K562 (cell line): ENCODE measurements at regions of chr3 and their contacts with region 1.

Region 1: DNA sequence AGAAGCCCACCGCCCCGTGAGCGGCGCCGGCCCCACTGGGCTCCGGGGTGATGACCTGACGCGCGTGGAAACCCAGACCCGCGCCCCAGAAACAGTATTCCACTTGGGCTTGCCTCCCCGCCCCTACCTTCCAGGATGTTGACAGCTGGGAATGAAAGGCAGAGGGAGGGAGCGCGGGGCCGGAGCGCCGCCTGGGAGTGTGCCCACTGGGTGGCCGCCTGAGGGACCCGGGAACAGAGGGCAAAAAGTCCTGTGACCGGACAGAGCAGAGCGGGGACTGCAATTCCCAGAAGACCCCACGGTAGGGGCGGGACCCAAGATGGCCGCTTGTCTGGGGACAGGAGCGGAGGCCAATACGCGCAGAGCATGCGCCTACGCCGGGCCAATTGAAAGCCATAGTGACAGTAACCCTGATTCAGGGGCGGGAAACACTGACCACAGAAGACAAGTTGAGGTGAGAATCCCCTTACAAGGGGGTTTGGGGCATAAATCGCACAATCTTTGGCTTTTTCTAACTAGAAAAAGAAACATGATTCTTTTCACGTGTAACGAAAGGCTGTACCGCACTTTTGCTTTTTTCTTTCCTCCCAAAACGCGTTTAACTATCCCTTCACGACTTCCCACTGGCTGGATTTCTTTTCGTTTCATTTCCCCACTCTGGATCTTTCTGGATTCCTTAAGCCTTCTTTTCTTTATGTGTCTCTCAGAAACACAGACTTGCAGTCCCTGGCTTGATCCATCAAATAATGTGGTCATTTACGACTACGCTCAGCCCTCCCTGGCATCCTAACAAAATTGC is at the start of gene FHIT:
- DNase-seq: peak; percentile 84 to 95 (median 88)
- ATAC-seq: peak; percentile 99
- H3K4me3 ChIP-seq: peak within 1 kb of the TSS; percentile 74
- H3K27ac ChIP-seq: peak within 1 kb of the TSS; percentile 77
- H3K4me1 ChIP-seq: peaks cover 2 to 7% of the 10 kb centered on the region in 2 experiments; a peak in 3 of 5 replicates
- H3K27me3 ChIP-seq: no peaks in the 10 kb centered on the region
- CTCF ChIP-seq: no peak
- EP300 ChIP-seq: no peak
- POLR2A ChIP-seq: peak; percentile 76
- RAD21 ChIP-seq: no peak
- polyA plus RNA-seq, gene FHIT: 3.6 to 4.3 TPM

Region 2: DNA sequence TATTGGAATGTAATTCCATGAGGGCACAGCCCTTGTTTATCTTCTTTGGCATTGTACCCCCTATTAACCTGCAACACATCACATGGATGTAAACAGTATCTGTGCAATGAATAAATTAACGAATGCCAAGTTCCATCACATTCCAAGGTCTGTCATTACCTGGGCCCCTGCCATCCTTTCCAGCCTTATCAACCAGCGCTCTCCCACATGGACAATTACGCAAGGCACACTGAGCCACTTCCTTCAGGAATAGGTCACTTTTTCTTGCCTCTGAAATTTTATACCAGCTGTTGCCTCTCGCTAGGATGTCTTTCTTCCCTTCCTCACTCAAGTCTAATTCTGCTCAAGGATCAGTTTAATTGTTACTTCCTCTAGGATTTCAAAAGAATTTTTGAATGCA is 1149.8 kb before region 1 on chr3:
- CTCF ChIA-PET with region 1: no interaction called
- POLR2A ChIA-PET with region 1: no interaction called
- in situ Hi-C with region 1: loop called (anchors 25 kb)
- intact Hi-C with region 1: no loop called
- DNase-seq: no peak
- ATAC-seq: no peak
- H3K4me3 ChIP-seq: no peak overlapping the region
- H3K27ac ChIP-seq: no peak overlapping the region
- H3K4me1 ChIP-seq: peaks cover 0 to 6% of the 10 kb centered on the region in 2 experiments; a peak in 1 of 5 replicates
- H3K27me3 ChIP-seq: no peaks in the 10 kb centered on the region
- CTCF ChIP-seq: no peak
- EP300 ChIP-seq: no peak
- POLR2A ChIP-seq: no peak
- RAD21 ChIP-seq: no peak

Region 3: GRCh38 chr3:61233746-61234145 is 17.6 kb before region 1 on chr3:
- CTCF ChIA-PET with region 1: no interaction called
- POLR2A ChIA-PET with region 1: no interaction called
- in situ Hi-C with region 1: no loop called
- intact Hi-C with region 1: no loop called
- DNase-seq: no peak
- ATAC-seq: no peak
- H3K4me3 ChIP-seq: no peak overlapping the region
- H3K27ac ChIP-seq: no peak overlapping the region
- H3K4me1 ChIP-seq: peaks cover 0 to 7% of the 10 kb centered on the region in 2 experiments; a peak in 2 of 5 replicates
- H3K27me3 ChIP-seq: no peaks in the 10 kb centered on the region
- CTCF ChIP-seq: no peak
- EP300 ChIP-seq: no peak
- POLR2A ChIP-seq: no peak
- RAD21 ChIP-seq: no peak

Region 4: GRCh38 chr3:61725851-61726333 is 474.5 kb after region 1 on chr3:
- CTCF ChIA-PET with region 1: no interaction called
- POLR2A ChIA-PET with region 1: no interaction called
- in situ Hi-C with region 1: no loop called
- intact Hi-C with region 1: no loop called
- DNase-seq: no peak
- ATAC-seq: no peak
- H3K4me3 ChIP-seq: no peak overlapping the region
- H3K27ac ChIP-seq: no peak overlapping the region
- H3K4me1 ChIP-seq: no peaks in the 10 kb centered on the region
- H3K27me3 ChIP-seq: no peaks in the 10 kb centered on the region; a peak in 1 of 5 replicates
- CTCF ChIP-seq: no peak
- EP300 ChIP-seq: no peak
- POLR2A ChIP-seq: no peak
- RAD21 ChIP-seq: no peak